Activated naive CD8-positive, alpha-beta T cell treated with anti-CD3 and anti-CD28 coated beads, Interleukin-2, amount 10 ng/mL, durations not matched to agents 7 days and 5 days (primary cell): ENCODE measurements at regions of chr12 and their contacts with region 1.

Region 1: DNA sequence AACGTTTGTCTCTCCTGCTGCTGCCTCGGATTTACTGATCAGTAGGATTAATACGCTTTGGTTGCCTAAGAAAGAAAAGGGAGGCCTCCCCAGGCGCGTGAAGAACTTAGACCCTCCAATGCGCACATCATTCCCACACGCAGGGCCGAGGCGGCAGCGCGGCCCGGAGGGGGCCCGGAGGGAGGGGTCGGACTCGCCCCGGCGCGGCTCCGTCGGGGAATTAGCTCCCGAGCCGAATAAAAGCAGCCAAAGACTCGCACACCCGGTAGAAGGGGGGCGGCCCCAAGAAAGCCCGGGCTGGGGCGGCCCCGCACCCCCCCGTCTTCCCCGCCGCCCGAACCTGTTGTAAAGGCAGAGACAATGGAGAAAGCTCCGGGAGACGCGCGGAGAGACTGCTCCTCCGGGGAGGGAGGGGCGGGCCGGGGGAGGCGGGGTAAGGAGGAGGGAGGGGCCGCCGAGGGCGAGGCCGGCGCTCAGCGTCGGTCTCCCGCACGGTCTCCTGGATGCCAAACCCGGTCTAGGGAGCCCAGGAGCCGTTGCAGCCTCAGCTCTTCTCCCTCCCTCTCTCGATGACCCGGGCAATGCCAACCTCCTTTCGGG is at the start of gene NELL2:
- DNase-seq: peak; percentile 73
- ATAC-seq: peak; percentile 77
- H3K4me3 Mint-ChIP-seq: peak within 1 kb of the TSS; percentile 96
- H3K27ac Mint-ChIP-seq: peak within 1 kb of the TSS; percentile 91
- H3K4me1 Mint-ChIP-seq: peaks cover 25% of the 10 kb centered on the region
- H3K27me3 Mint-ChIP-seq: peaks cover 2% of the 10 kb centered on the region
- total RNA-seq, gene NELL2: 147 to 161 TPM

Region 2: DNA sequence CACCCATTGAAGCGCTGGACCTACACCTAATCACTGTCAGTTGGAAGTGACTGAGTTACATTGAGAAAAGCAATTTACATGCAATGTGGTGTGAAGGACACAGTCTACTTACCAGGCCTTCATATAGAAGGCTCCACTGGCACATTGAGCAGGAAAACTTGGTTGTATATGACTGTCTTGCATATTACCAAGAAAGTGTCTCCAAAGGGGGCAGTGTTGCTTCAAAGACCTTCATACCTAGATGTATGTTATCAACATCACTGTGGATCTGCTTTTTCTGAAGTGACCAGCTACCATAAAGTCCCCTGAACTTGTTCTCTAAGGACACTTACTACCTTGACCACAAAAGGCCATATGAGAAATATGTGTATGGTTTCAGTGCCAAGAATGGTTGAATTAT is 64.0 kb before region 1 on chr12:
- POLR2A ChIA-PET with region 1: interaction called, 11 read pairs
- DNase-seq: no peak
- ATAC-seq: peak; percentile 86
- H3K4me3 Mint-ChIP-seq: no peak overlapping the region
- H3K27ac Mint-ChIP-seq: no peak overlapping the region
- H3K4me1 Mint-ChIP-seq: peaks cover 38% of the 10 kb centered on the region
- H3K27me3 Mint-ChIP-seq: no peaks in the 10 kb centered on the region

Region 3: DNA sequence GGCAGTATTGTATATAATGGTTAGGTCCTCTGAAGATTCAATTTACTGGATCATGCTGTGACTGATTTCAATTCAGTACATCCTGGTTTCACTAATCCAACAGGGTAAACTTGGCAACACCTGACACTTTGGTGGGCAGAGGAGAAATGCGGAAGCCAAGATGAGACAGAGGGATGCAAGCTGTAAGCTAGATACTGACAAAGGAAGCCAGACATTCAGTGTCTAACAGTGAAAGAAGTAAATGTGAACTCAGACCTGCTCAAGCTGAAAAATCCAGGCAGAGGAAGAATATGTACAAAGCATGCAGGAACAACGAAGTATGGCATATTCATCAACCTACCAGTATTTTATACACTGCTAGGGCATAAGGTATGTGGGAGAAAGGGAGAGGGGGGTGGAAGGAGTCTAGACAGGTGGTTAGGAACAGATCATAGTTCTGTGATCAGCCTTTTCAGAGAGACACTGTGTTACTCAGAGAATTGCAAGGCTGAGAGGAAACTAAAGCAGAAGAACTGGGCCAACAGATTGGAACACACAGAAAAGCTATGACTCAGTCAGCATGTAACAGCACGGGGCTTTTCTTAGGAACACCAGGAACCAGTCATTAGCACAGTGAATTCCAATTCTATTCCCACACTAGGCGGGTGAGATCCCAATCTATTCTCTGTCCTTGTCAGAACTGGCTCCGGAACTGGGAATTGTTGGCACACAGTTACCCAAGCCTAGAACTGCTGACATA is 40.2 kb before region 1 on chr12:
- POLR2A ChIA-PET with region 1: interaction called, 16 read pairs
- DNase-seq: no peak
- ATAC-seq: peak; percentile 65
- H3K4me3 Mint-ChIP-seq: peak overlapping the region; percentile 83
- H3K27ac Mint-ChIP-seq: peak overlapping the region; percentile 96
- H3K4me1 Mint-ChIP-seq: peaks cover 74% of the 10 kb centered on the region
- H3K27me3 Mint-ChIP-seq: no peaks in the 10 kb centered on the region